Activated CD8-positive, alpha-beta memory T cell treated with anti-CD3 and anti-CD28 coated beads, Interleukin-2, amount 10 ng/mL, durations not matched to agents 7 days and 5 days (primary cell): ENCODE measurements at regions of chr17 and their contacts with region 1.

Region 1: DNA sequence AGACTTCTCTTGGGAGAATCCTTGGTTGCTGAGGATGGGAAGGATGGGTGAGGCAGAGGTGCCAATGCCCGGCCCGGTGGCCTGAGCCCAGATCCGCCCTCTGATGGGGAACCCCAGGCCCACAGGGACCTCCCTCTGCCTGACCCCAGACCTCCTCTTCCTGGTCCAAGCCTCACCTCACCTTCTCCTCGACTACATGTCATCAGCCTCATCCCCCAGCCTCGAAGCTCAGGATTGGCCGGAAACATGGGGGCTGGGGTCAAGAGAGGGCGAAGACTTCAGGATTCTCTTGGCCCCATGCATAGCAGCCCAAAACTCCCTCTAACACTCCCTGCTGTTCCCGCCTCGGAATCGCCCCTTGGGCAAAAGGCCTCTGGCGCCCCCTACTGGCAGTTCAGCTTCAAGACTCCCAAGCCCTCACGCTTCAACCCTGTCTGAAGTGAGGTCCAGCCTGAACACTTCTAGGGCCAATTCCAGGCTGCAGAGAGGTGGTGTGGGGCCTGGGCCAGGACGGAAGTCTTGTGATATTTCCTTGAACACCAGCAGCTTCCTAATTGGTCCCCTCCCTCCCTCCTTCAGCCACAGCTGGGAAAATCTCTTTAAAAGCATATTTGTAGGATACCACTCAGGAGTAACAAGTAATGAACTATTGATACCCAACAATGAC is 47.2 kb downstream of the ARHGAP27 start:
- DNase-seq: peak; percentile 92
- ATAC-seq: peak; percentile 97
- H3K4me3 Mint-ChIP-seq: no peak overlapping the region
- H3K27ac Mint-ChIP-seq: no peak overlapping the region
- H3K4me1 Mint-ChIP-seq: peaks cover 25% of the 10 kb centered on the region
- H3K27me3 Mint-ChIP-seq: peaks cover 7% of the 10 kb centered on the region

Region 2: DNA sequence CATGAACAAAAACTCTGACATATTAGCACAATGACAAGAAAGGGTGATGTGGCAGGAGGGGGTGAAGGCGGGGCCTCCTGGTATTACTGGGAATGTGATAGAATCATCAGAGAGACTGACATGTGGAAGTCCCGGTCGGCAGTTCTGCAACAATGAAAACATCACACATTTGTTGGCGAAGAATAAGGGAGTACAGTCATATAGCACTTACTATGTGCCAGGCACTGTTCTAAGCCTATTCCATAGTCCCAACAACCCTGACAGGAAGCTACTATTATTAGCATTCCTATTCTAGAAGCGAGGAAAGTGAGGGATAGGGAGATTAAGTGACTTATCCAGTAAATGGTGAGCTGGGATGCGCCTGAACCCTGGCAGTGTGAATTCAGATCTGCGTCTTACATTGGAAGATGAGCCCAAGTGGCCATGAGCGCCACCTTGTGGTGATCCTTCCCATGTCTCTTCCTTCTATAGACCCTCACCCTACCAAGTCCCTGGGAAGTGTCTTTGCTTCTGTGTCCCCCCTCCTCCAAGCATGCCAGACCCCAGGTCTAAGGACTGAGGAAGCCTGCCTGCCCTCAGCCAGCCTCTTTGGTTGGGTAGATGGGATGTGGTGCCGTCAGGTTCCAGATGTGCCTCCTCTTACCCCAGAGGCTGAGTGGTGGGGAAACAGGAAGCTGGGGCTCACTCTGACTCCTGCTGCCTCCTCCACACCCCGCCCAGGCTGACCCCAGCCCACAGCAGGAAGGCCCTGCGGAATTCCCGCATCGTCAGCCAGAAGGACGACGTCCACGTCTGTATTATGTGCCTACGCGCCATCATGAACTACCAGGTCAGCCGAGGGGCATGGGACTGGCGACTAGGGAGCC is 149.8 kb before region 1 on chr17:
- CTCF ChIA-PET with region 1: interaction called, 23 read pairs
- DNase-seq: peak; percentile 82
- ATAC-seq: peak; percentile 60
- H3K4me3 Mint-ChIP-seq: no peak overlapping the region
- H3K27ac Mint-ChIP-seq: peak overlapping the region; percentile 69
- H3K4me1 Mint-ChIP-seq: peaks cover 58% of the 10 kb centered on the region
- H3K27me3 Mint-ChIP-seq: no peaks in the 10 kb centered on the region

Region 3: GRCh38 chr17:45277216-45277849 is 108.1 kb before region 1 on chr17:
- CTCF ChIA-PET with region 1: interaction called, 222 read pairs
- DNase-seq: peak; percentile 94
- ATAC-seq: peak; percentile 98
- H3K4me3 Mint-ChIP-seq: no peak overlapping the region
- H3K27ac Mint-ChIP-seq: peak overlapping the region; percentile 54
- H3K4me1 Mint-ChIP-seq: peaks cover 15% of the 10 kb centered on the region
- H3K27me3 Mint-ChIP-seq: no peaks in the 10 kb centered on the region

Region 4: GRCh38 chr17:45302649-45303173 is 82.8 kb before region 1 on chr17:
- CTCF ChIA-PET with region 1: interaction called, 11 read pairs
- DNase-seq: peak; percentile 80
- ATAC-seq: peak; percentile 68
- H3K4me3 Mint-ChIP-seq: peak overlapping the region; percentile 55
- H3K27ac Mint-ChIP-seq: peak overlapping the region; percentile 90
- H3K4me1 Mint-ChIP-seq: peaks cover 84% of the 10 kb centered on the region
- H3K27me3 Mint-ChIP-seq: no peaks in the 10 kb centered on the region

Region 5: GRCh38 chr17:45332989-45333701 is 52.3 kb before region 1 on chr17:
- CTCF ChIA-PET with region 1: interaction called, 18 read pairs
- DNase-seq: no peak
- ATAC-seq: peak; percentile 16
- H3K4me3 Mint-ChIP-seq: no peak overlapping the region
- H3K27ac Mint-ChIP-seq: peak overlapping the region; percentile 68
- H3K4me1 Mint-ChIP-seq: peaks cover 40% of the 10 kb centered on the region
- H3K27me3 Mint-ChIP-seq: no peaks in the 10 kb centered on the region

Region 6: GRCh38 chr17:45794840-45795239 is 409.4 kb after region 1 on chr17:
- CTCF ChIA-PET with region 1: no interaction called
- DNase-seq: no peak
- ATAC-seq: no peak
- H3K4me3 Mint-ChIP-seq: no peak overlapping the region
- H3K27ac Mint-ChIP-seq: no peak overlapping the region
- H3K4me1 Mint-ChIP-seq: no peaks in the 10 kb centered on the region
- H3K27me3 Mint-ChIP-seq: peaks cover 43% of the 10 kb centered on the region